Calu3 (cell line): ENCODE measurements at regions of chr16 and their contacts with region 1.

Region 1: DNA sequence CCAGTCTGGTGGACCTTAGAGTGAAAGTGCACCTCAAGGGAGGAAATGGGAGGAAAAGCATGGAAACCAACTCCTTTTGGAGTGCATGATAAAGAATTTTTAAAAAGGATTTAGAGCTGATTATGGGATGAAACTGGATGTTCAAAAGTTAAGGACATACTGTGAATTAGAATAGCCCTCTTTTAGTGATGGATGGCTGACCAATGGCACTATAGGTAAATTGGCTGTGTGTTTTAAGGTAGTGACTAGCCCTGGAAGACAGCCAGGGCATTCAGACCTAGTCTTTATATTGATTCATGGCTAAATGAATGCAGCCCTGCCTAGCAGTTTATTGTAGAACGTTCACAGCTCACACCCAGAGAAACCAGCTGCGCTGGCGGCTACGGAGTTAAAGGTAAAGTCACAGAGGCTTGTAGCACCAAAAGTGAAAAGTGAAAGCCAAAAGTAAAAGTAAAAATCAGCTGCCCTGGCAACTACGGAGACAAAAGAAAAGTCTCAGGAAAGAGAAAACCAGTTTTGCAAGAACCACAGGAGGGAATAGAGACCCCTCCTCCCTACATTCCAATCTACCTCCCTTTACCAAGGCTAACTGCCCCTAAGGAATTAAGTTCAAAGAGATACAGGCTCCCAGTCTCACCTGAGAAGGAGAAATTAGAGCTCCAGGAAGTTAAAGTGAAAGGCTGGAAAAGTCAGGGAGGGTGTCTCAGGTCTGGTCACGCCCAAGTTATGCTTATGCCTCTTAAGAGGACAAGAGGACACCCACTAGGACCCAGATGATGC is 21.8 kb downstream of the ACSM1 start:
- DNase-seq: peak; percentile 68
- H3K4me3 Mint-ChIP-seq: peak overlapping the region; percentile 72
- H3K27ac Mint-ChIP-seq: peak overlapping the region; percentile 24
- H3K4me1 Mint-ChIP-seq: peaks cover 47% of the 10 kb centered on the region
- H3K27me3 Mint-ChIP-seq: no peaks in the 10 kb centered on the region
- CTCF ChIP-seq: no peak

Region 2: GRCh38 chr16:20614186-20615141 is 61.2 kb before region 1 on chr16:
- CTCF ChIA-PET with region 1: no interaction called
- intact Hi-C with region 1: no loop called
- DNase-seq: no peak
- H3K4me3 Mint-ChIP-seq: no peak overlapping the region
- H3K27ac Mint-ChIP-seq: no peak overlapping the region
- H3K4me1 Mint-ChIP-seq: no peaks in the 10 kb centered on the region
- H3K27me3 Mint-ChIP-seq: peaks cover 95% of the 10 kb centered on the region
- CTCF ChIP-seq: no peak

Region 3: DNA sequence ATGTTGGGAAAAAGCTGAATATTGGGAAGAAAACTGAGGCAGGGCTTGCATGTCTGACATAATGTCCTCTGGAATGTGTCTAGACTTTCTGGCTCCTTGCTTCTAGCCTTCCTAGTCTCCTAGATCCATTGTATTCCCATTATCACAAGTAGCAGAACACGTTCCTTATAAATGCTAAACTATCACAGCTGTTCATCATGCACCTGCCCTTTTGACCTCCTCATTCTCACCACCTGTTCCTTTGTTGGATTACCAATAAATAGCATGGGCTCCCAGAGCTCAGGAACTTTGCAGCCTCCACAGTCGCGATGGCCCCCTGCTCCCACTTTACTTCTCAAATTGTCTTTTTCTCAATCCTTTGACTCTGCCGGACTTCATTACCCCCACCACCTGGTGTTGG is 27.9 kb before region 1 on chr16:
- CTCF ChIA-PET with region 1: no interaction called
- intact Hi-C with region 1: loop called (anchors 2 kb)
- DNase-seq: no peak
- H3K4me3 Mint-ChIP-seq: no peak overlapping the region
- H3K27ac Mint-ChIP-seq: no peak overlapping the region
- H3K4me1 Mint-ChIP-seq: peaks cover 8% of the 10 kb centered on the region
- H3K27me3 Mint-ChIP-seq: no peaks in the 10 kb centered on the region
- CTCF ChIP-seq: no peak